ENCODE measurements at regions of chr3 and their contacts with region 1.

Region 1: DNA sequence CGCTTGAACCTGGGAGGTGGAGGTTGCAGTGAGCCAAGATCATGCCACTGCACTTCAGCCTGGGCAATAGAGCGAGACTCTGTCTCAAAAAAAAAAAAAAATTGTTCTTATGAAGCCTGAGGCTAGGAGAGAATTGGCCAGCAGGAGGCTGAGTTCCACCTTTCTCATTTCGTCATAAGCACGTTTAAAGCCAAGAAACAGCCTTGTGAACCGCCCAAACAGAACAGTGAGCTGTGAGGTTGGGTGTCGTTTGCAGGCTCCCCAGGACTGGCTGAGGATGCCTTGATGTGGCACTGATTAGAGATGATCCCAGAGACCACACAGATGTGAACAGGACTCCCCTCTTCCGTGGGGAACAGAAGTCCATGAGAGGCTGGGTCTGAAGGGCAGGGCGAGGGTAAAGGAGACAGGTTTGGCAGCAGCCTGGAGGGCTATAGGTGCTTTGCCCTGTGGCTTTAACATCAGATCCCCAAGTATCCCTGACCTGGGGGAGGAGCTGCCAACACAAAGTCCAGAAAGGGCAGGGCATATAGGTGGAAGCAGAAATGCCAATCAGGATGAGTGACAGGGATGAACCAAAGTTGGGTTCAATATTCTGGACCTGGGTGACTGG is 52.9 kb downstream of the CLEC3B start:
- DNase-seq: peak in 5 of 9 donors; percentile 8 to 51 (median 33)
- ATAC-seq: peak; percentile 32
- H3K4me3 ChIP-seq: no peak overlapping the region
- H3K4me3 Mint-ChIP-seq: no peak overlapping the region
- H3K27ac ChIP-seq: no peak overlapping the region
- H3K27ac Mint-ChIP-seq: peak overlapping the region in 4 of 9 donors; percentile 48 to 82 (median 63)
- H3K4me1 ChIP-seq: no peaks in the 10 kb centered on the region
- H3K4me1 Mint-ChIP-seq: peaks cover 3 to 13% (median 4%) of the 10 kb centered on the region in 7 donors
- H3K27me3 ChIP-seq: no peaks in the 10 kb centered on the region
- H3K27me3 Mint-ChIP-seq: peaks cover 0 to 26% (median 0%) of the 10 kb centered on the region in 5 donors

Region 2: GRCh38 chr3:45119824-45120614 is 41.0 kb after region 1 on chr3:
- CTCF ChIA-PET with region 1: no interaction called
- POLR2A ChIA-PET with region 1: no interaction called
- intact Hi-C with region 1: loop called in 1 of 2 experiments (anchors 5 kb)
- DNase-seq: no peak
- ATAC-seq: no peak
- H3K4me3 ChIP-seq: no peak overlapping the region
- H3K4me3 Mint-ChIP-seq: no peak overlapping the region
- H3K27ac ChIP-seq: no peak overlapping the region
- H3K27ac Mint-ChIP-seq: peak overlapping the region in 1 of 9 donors; percentile 23
- H3K4me1 ChIP-seq: peaks cover 17 to 22% of the 10 kb centered on the region in 2 donors
- H3K4me1 Mint-ChIP-seq: peaks cover 16 to 62% (median 27%) of the 10 kb centered on the region in 7 donors
- H3K27me3 ChIP-seq: peaks cover 0 to 3% of the 10 kb centered on the region in 2 donors
- H3K27me3 Mint-ChIP-seq: peaks cover 0 to 43% (median 0%) of the 10 kb centered on the region in 5 donors

Measured in naive thymus-derived CD4-positive, alpha-beta T cell (primary cell).